A673 (cell line): ENCODE measurements at regions of chr21 and their contacts with region 1.

Region 1: GRCh38 chr21:45554477-45555175 is 12.4 kb upstream of the SLC19A1 start:
- DNase-seq: peak; percentile 83
- H3K4me3 ChIP-seq: peak overlapping the region; percentile 83
- H3K27ac ChIP-seq: peak overlapping the region; percentile 51
- H3K4me1 ChIP-seq: no peaks in the 10 kb centered on the region
- H3K27me3 ChIP-seq: no peaks in the 10 kb centered on the region
- CTCF ChIP-seq: peak; percentile 71

Region 2: GRCh38 chr21:45593162-45594022 is 38.8 kb after region 1 on chr21:
- CTCF ChIA-PET with region 1: interaction called, 10 read pairs
- POLR2A ChIA-PET with region 1: no interaction called
- intact Hi-C with region 1: no loop called
- DNase-seq: no peak
- H3K4me3 ChIP-seq: no peak overlapping the region
- H3K27ac ChIP-seq: no peak overlapping the region
- H3K4me1 ChIP-seq: no peaks in the 10 kb centered on the region
- H3K27me3 ChIP-seq: no peaks in the 10 kb centered on the region
- CTCF ChIP-seq: no peak